RWPE1 (cell line): ENCODE measurements at regions of chr1 and their contacts with region 1.

Region 1: DNA sequence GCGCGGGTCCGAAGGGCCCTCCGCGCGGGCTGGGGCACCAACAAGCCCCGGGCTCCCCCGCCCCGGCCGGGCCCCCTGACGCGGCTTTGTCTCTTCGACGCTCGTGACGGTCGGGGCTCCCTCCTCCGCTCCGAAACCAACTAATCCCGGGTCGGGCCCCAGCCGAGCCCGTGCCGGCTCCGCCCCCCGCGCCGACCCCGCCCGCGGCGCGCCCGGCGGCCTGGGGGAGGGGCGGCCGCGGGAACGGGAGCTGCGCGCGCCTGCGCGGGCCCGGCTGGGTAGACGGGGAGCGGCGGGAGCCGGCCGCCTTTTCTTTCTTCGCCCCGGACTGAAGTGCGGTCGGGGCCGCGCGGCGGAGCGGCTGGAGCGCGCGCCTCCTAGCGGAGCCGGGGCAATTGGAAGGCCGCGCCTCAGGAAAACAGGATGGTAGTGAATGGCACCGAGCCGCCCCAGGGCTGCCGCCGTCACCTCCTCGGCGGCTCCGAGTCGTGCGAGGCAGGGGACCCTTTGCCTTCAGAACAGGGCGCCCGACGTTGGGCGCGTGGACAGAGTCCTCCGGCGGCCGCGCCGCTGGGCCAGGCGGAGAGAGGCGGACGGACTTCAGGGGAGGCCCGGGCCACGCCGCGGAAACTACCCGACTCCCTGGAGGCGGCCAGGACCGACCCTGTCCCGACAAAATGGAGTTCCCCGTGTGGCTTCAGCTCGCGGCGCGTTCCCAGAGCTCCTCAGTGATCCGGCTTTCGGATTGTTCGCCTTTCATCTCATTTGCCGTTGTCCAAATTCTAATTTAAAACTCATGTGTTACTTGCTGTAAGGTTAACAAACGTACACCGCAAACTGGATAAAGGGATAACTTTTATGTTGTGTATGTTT is at the start of gene TP53BP2:
- DNase-seq: peak; percentile 88
- H3K27ac ChIP-seq: peak within 1 kb of the TSS; percentile 95
- CTCF ChIP-seq: peak; percentile 82

Region 2: GRCh38 chr1:223811634-223812415 is 34.2 kb before region 1 on chr1:
- CTCF ChIA-PET with region 1: interaction called, 10 read pairs
- POLR2A ChIA-PET with region 1: no interaction called
- DNase-seq: peak; percentile 19
- H3K27ac ChIP-seq: no peak overlapping the region
- CTCF ChIP-seq: peak; percentile 64

Region 3: DNA sequence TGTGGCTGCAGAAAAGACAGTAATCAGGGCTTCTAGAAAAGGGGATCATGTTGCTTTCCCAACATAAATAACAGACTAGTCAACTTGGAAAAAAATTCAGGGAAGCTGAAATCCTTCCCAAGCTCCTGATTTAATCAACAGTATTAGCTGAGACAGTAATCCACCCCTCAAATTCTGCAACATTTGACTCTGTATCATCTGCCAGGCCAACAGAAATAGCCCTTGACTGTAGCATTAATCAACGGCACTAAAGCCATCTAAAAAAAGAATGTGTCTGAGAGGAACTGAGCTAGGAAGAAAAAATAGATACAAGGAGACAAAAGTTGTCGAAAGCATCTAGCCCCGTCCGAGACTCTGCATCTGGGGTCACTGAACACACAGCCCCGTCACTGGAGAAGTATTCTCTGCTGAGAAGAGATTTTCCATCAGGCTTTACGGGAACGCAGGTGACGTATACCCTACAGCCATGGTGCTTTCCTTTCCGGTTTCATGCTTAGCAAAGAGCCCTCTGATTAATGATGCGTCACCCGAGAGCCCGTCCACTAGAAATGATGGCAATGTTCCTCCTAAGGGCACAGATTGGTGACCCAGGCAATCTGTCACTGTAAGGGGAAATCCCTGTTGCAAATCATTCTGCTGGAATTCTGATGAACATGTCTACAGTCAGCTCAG is 41.8 kb after region 1 on chr1:
- CTCF ChIA-PET with region 1: no interaction called
- POLR2A ChIA-PET with region 1: no interaction called
- DNase-seq: peak; percentile 93
- H3K27ac ChIP-seq: peak overlapping the region; percentile 52; the same call in 1 of the 2 replicates
- CTCF ChIP-seq: no peak